Activated naive CD4-positive, alpha-beta T cell treated with anti-CD3 and anti-CD28 coated beads for 36 hours (primary cell): ENCODE measurements at regions of chr15 and their contacts with region 1.

Region 1: DNA sequence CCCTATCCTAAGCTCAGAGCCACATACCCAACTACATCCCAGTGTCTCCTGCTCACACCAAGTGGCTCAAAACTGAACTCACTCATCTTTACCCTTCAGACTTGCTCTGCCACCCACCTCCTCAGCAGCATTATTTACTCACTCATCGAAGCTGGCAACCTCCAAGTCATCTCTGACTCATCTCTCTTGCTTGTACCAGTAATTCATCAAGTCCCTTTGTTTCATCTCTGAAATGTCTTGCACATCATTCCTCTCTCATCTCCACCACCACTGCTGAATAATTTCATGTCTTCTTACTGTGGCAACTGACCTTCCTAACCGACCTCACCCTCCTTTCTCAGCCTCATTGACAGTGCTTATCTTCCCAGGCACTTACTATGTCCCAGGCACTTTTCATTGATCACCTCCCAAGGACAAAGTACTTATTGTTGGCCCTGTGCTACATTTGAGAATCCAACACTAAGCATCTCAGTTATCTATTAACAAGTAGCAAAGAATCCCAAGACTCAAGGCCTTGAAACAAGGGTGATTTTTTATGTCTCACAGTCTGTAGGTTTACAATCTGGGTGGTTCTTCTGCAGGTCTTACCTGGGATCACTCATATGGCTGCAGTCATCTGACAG is 82.0 kb downstream of the MRPL46 start:
- DNase-seq: peak; percentile 55
- H3K4me3 Mint-ChIP-seq: no peak overlapping the region
- H3K27ac Mint-ChIP-seq: no peak overlapping the region
- H3K4me1 Mint-ChIP-seq: peaks cover 8% of the 10 kb centered on the region
- H3K27me3 Mint-ChIP-seq: peaks cover 14% of the 10 kb centered on the region

Region 2: GRCh38 chr15:88419830-88420229 is 34.6 kb after region 1 on chr15:
- CTCF ChIA-PET with region 1: no interaction called
- intact Hi-C with region 1: loop called (anchors 1 kb)
- DNase-seq: peak; percentile 28
- H3K4me3 Mint-ChIP-seq: no peak overlapping the region
- H3K27ac Mint-ChIP-seq: no peak overlapping the region
- H3K4me1 Mint-ChIP-seq: peaks cover 15% of the 10 kb centered on the region
- H3K27me3 Mint-ChIP-seq: peaks cover 29% of the 10 kb centered on the region

Region 3: GRCh38 chr15:88810434-88810995 is 425.3 kb after region 1 on chr15:
- CTCF ChIA-PET with region 1: no interaction called
- intact Hi-C with region 1: no loop called
- DNase-seq: no peak
- H3K4me3 Mint-ChIP-seq: no peak overlapping the region
- H3K27ac Mint-ChIP-seq: no peak overlapping the region
- H3K4me1 Mint-ChIP-seq: no peaks in the 10 kb centered on the region
- H3K27me3 Mint-ChIP-seq: peaks cover 16% of the 10 kb centered on the region